Activated CD4-positive, alpha-beta T cell treated with anti-CD3 and anti-CD28 coated beads, Interleukin-2, amount 10 ng/mL, durations not matched to agents 24 days and 14 days (primary cell): ENCODE measurements at regions of chr2 and their contacts with region 1.

Region 1: DNA sequence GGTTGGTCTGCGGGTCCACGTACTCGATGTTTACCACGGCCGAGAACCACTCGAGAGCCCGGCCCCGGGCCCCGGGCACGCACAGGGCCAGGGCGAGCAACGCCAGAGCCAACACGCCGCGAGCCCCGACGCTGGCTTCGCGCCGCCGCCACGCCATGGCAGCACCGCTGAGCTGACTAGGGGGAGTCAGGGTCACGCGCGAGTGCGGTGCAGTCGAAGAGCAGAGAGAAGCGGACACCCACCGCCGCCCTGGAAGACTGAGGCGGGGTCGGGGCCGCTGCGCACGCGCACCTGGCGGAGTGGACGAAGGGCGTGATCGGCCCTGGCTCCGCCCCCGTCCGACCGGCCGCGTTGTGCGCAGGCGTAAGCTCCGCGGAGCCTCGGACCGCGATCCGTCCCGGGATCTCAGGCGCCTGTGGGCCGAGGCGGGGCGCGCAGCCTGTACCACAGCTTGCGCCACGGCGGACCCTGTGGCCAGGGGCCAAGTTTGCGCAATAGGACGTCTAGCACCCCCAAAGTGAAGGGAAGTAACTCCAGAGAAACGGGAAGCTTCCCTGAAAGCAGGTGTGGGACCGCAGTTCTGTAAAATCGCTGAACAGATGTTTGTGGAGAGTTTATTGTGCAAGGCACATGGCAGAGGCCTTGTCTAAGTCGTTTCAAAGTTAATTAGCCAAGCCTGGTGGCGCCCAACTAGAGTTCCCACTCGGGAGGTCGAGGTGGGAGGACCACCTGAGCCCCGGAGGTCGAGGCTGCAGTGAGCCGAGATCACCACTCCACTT is at the start of gene RNF149:
- DNase-seq: peak; percentile 98
- H3K4me3 Mint-ChIP-seq: peak within 1 kb of the TSS; percentile 88
- H3K27ac Mint-ChIP-seq: peak within 1 kb of the TSS; percentile 96
- H3K4me1 Mint-ChIP-seq: peaks cover 63% of the 10 kb centered on the region
- H3K27me3 Mint-ChIP-seq: no peaks in the 10 kb centered on the region
- total RNA-seq, gene RNF149: 40.3 and 40.7 TPM in 2 replicates

Region 2: GRCh38 chr2:101001691-101002561 is 306.7 kb before region 1 on chr2 and contains the start of gene RPL31:
- intact Hi-C with region 1: loop called (anchors 2 kb)
- DNase-seq: peak; percentile 99
- H3K4me3 Mint-ChIP-seq: peak within 1 kb of the TSS; percentile 100
- H3K27ac Mint-ChIP-seq: peak within 1 kb of the TSS; percentile 96
- H3K4me1 Mint-ChIP-seq: peaks cover 46% of the 10 kb centered on the region
- H3K27me3 Mint-ChIP-seq: no peaks in the 10 kb centered on the region
- total RNA-seq, gene RPL31: 1,154 and 1,159 TPM in 2 replicates

Region 3: DNA sequence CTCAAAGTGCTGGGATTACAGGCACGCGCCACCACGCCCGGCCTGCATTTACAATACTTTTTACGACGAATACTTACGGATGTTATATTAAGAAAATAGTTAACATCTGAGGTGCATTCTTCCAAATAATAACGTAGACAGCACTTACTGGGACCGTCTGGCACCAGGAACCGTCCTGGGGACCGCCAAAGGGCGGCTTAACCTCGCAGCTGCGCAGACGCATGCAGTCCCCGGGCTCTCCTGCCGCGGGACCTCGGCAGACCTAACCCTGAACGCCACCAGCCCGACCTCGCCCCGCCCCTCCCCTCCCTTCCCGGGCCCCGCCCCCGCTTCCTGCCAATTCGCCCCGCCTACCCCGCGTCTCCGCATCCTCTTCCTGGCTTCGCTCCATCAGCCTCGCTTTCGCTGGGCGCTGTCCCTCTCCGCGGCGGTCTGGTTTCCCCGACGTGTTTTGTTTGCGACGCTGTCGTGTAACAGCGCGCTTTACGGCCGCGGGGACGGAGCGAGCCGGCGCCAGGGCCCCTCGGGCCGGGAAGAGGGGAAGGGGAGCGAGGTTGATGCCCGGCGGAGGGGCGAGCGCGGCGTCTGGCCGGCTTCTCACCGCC is 56.1 kb before region 1 on chr2 and contains the start of gene CNOT11:
- intact Hi-C with region 1: loop called (anchors 1 kb)
- DNase-seq: peak; percentile 99
- H3K4me3 Mint-ChIP-seq: peak within 1 kb of the TSS; percentile 93
- H3K27ac Mint-ChIP-seq: peak within 1 kb of the TSS; percentile 96
- H3K4me1 Mint-ChIP-seq: peaks cover 44% of the 10 kb centered on the region
- H3K27me3 Mint-ChIP-seq: no peaks in the 10 kb centered on the region
- total RNA-seq, gene CNOT11: 65.0 and 69.6 TPM in 2 replicates

Region 4: GRCh38 chr2:101278925-101279324 is 29.7 kb before region 1 on chr2:
- intact Hi-C with region 1: no loop called
- DNase-seq: no peak
- H3K4me3 Mint-ChIP-seq: no peak overlapping the region
- H3K27ac Mint-ChIP-seq: no peak overlapping the region
- H3K4me1 Mint-ChIP-seq: peaks cover 10% of the 10 kb centered on the region
- H3K27me3 Mint-ChIP-seq: no peaks in the 10 kb centered on the region

Region 5: DNA sequence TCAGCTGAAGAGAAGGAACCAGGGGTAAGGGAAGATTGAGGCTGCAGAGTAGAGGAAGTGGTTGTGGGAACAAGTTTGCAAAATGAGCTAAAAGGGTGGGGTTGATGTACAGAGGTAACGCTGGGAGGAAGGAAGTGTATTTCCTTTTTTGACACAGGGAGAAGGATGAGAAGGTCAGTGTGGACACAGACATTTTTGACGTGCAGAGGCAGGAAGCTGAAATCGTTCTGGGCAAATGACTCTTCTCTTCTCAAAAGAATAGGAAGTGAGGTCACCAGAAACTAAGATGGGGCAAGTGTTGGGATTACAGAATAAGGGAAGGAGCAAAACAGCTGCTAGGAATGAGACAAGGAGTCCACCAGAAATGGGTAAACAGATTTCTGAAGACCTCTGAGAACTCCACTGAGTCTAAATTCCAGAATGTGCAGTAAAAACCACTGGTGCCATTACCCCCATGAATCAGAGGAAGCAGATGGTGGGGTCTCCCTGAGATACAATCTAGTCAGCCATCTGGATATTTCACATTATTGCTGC is 19.9 kb after region 1 on chr2:
- intact Hi-C with region 1: loop called (anchors 1 kb)
- DNase-seq: peak; percentile 87
- H3K4me3 Mint-ChIP-seq: no peak overlapping the region
- H3K27ac Mint-ChIP-seq: no peak overlapping the region
- H3K4me1 Mint-ChIP-seq: peaks cover 25% of the 10 kb centered on the region
- H3K27me3 Mint-ChIP-seq: no peaks in the 10 kb centered on the region

Region 6: GRCh38 chr2:101473911-101474701 is 165.5 kb after region 1 on chr2:
- intact Hi-C with region 1: loop called (anchors 10 kb)
- DNase-seq: peak; percentile 88
- H3K4me3 Mint-ChIP-seq: peak overlapping the region; percentile 84
- H3K27ac Mint-ChIP-seq: peak overlapping the region; percentile 92
- H3K4me1 Mint-ChIP-seq: peaks cover 37% of the 10 kb centered on the region
- H3K27me3 Mint-ChIP-seq: no peaks in the 10 kb centered on the region

Region 7: GRCh38 chr2:102366406-102367112 is 1057.9 kb after region 1 on chr2:
- intact Hi-C with region 1: loop called (anchors 5 kb)
- DNase-seq: peak; percentile 64
- H3K4me3 Mint-ChIP-seq: peak overlapping the region; percentile 73
- H3K27ac Mint-ChIP-seq: peak overlapping the region; percentile 91
- H3K4me1 Mint-ChIP-seq: peaks cover 77% of the 10 kb centered on the region
- H3K27me3 Mint-ChIP-seq: no peaks in the 10 kb centered on the region